Activated CD4-positive, alpha-beta T cell treated with anti-CD3 and anti-CD28 coated beads for 36 hours (primary cell): ENCODE measurements at regions of chr19 and their contacts with region 1.

Region 1: GRCh38 chr19:16160943-16161560 is 12.3 kb downstream of the CIB3 start:
- DNase-seq: peak; percentile 73
- ATAC-seq: peak; percentile 86
- H3K4me3 Mint-ChIP-seq: peak overlapping the region; percentile 28
- H3K27ac Mint-ChIP-seq: peak overlapping the region; percentile 60
- H3K4me1 Mint-ChIP-seq: peaks cover 18% of the 10 kb centered on the region
- H3K27me3 Mint-ChIP-seq: no peaks in the 10 kb centered on the region

Region 2: DNA sequence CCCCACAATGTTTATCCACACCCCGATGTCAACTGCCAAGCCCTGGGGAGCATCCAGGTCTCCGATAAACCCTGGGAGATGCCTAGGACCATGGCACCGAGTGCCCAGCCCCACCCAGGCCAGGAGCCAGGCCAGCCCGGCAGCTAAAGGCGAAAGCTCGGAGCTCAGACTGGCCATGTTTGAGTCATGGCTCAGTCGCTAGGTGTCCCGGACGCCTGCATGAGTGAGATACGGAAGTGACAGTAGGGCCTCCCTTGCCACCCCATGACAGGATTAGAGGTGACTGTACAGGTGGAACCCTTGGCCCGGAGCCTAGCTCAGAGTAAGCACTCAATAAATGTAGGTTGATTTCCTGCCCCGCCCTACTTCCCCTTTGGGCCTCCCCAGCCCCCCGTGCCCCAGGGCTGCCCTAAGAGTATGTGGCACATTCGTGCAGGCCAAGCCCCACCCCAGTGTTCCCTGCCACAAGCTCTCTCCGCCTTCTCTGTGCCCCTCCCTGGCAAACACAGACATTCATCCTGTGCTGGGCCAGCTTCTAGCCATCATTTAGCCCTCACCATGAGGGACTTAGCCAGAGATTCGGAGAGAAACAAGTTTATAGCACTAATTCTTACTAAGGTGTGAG is 90.6 kb before region 1 on chr19:
- CTCF ChIA-PET with region 1: no interaction called
- POLR2A ChIA-PET with region 1: no interaction called
- intact Hi-C with region 1: loop called in 1 of 2 experiments (anchors 2 kb)
- DNase-seq: peak; percentile 92
- ATAC-seq: peak; percentile 97
- H3K4me3 Mint-ChIP-seq: no peak overlapping the region
- H3K27ac Mint-ChIP-seq: no peak overlapping the region
- H3K4me1 Mint-ChIP-seq: peaks cover 42% of the 10 kb centered on the region
- H3K27me3 Mint-ChIP-seq: no peaks in the 10 kb centered on the region

Region 3: DNA sequence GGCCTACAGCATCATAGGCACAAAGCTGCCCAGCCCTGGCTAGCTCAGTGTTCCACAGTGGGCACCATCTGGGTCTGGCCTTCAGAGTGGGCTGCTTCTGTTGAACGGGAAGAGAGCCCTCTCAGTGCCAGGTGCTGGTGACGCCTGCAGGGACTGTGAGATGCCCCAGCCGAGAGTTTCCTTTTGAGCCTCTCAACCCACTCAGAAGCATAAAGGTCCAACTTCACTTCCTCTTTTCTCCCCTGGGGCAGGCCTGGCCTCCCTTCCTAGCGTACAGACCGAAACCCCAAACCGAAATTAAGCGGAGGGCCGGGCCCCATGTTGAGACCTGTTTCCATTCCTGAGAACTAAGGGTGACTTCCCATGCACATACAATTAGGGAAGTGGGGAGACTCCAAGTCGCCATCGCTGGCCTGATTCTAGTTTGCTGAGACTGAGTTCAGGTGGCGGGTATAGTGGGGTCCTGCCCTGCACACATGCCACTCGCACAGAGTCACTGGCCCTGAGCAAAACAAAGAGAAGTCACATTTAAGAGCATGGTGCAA is 42.5 kb before region 1 on chr19:
- CTCF ChIA-PET with region 1: interaction called, 5 read pairs
- POLR2A ChIA-PET with region 1: no interaction called
- intact Hi-C with region 1: loop called in 1 of 2 experiments (anchors 1 kb)
- DNase-seq: peak; percentile 74
- ATAC-seq: peak; percentile 75
- H3K4me3 Mint-ChIP-seq: peak overlapping the region; percentile 35
- H3K27ac Mint-ChIP-seq: peak overlapping the region; percentile 89
- H3K4me1 Mint-ChIP-seq: peaks cover 59% of the 10 kb centered on the region
- H3K27me3 Mint-ChIP-seq: no peaks in the 10 kb centered on the region

Region 4: DNA sequence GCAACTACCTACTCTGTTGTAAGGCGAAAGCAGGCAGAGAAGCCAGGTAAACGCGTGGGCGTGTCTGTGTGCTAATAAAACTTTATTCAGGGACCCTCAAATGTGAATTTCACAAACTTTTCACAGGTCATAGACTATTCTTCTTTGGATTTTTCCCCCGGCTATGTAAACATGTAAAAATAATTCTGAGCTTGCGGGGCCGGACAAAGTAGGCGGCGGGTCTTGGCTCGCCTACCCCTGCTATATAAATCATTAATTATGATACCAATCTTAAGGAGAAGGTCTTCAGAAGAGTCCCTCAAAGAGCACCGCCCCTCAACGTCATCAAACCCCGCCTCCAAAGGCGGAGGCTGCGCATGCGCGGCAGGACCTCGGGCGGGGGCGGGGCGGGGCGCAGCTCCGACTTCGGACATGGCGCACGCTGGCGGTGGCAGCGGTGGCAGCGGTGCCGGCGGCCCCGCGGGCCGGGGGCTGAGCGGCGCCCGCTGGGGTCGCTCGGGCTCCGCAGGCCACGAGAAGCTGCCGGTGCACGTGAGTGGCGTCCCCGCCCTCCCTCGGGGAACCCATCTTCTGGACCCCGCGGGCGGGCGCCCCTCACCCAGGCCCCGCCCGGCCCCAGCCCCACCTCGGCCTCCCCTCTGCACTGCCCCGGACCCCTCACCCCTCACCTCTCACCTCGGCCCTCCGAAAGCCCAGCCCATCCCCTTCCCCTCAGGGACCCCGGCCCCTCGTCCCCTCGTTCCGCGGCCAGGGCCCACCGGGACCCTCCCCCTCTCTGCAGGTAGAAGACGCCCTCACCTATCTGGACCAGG is 668.2 kb after region 1 on chr19 and contains the start of gene SIN3B:
- CTCF ChIA-PET with region 1: no interaction called
- POLR2A ChIA-PET with region 1: interaction called, 10 read pairs
- intact Hi-C with region 1: no loop called
- DNase-seq: peak; percentile 93
- ATAC-seq: peak; percentile 91
- H3K4me3 Mint-ChIP-seq: peak within 1 kb of the TSS; percentile 79
- H3K27ac Mint-ChIP-seq: peak within 1 kb of the TSS; percentile 82
- H3K4me1 Mint-ChIP-seq: peaks cover 38% of the 10 kb centered on the region
- H3K27me3 Mint-ChIP-seq: peaks cover 20% of the 10 kb centered on the region
- total RNA-seq, gene SIN3B: 27.6 to 28.5 TPM